Activated CD4-positive, alpha-beta memory T cell treated with anti-CD3 and anti-CD28 coated beads for 36 hours (primary cell): ENCODE measurements at regions of chr3 and their contacts with region 1.

Region 1: DNA sequence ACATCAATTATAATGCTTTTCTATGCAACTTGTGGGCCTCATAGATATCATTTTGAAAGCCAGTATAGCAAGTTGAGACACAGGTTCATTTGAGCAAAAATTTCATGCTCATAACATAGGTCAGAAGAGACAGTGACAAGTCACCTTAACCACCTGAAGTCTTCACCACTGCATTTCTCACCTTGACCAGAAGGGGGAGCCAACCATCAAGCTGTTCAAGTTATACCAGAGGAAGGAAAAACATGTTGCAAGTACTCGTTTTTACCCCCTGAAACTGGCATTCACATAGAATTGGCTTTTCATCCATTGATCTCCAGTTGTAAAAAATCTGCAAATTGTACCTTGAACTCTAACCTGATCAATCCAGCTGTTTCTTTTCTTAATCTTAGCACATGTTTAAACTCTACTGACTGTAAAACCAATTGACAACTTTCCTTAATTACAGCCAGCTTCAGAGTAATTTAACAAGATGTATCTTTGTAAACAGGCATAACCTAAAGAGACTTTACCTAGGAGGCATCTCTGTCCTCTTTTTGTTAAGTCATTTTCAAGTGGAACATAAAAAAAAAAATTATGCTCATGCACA is 1.4 kb downstream of the LMOD3 start:
- DNase-seq: peak; percentile 88
- H3K4me3 Mint-ChIP-seq: no peak overlapping the region
- H3K27ac Mint-ChIP-seq: no peak overlapping the region
- H3K4me1 Mint-ChIP-seq: peaks cover 5% of the 10 kb centered on the region
- H3K27me3 Mint-ChIP-seq: no peaks in the 10 kb centered on the region

Region 2: DNA sequence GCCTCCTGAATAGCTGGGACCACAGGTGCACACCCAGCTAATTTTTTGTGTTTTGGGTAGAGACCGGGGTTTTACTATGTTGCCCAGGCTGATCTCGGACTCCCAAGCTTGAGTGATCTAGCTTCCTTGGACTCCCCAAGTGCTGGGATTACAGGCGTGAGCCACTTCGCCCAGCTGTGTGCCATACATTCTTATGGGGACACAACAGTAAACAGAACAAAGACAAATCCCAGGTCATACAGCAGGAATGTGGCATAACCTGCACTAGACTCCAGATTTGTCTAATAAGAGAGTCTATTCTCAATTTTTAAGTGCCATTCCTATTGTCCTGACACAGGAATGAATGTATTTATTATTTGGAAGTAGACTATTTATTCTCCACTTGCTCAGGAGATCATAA is 18.6 kb before region 1 on chr3:
- CTCF ChIA-PET with region 1: interaction called, 22 read pairs
- POLR2A ChIA-PET with region 1: no interaction called
- intact Hi-C with region 1: no loop called
- DNase-seq: no peak
- H3K4me3 Mint-ChIP-seq: no peak overlapping the region
- H3K27ac Mint-ChIP-seq: no peak overlapping the region
- H3K4me1 Mint-ChIP-seq: peaks cover 54% of the 10 kb centered on the region
- H3K27me3 Mint-ChIP-seq: no peaks in the 10 kb centered on the region

Region 3: DNA sequence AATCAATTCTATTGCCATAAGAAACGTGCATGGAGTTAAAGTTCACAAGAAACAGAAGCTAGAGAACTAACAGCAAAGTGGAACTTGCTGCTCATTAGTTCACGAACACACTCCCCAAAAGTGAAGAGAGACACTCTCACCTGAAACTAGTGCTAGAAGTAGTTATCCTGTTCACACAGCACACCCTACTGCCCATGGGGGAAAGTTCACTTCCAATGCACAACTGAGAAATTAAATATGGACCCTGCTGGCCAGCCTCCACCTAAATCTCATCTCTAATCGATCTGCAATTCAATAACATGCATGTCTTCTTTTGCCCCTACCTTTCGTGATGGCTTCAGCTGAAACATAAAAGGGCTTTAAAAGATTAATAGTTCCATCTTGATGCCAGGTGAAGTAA is 304.3 kb after region 1 on chr3:
- CTCF ChIA-PET with region 1: interaction called, 22 read pairs
- POLR2A ChIA-PET with region 1: no interaction called
- intact Hi-C with region 1: no loop called
- DNase-seq: peak; percentile 57
- H3K4me3 Mint-ChIP-seq: no peak overlapping the region
- H3K27ac Mint-ChIP-seq: no peak overlapping the region
- H3K4me1 Mint-ChIP-seq: peaks cover 2% of the 10 kb centered on the region
- H3K27me3 Mint-ChIP-seq: peaks cover 2% of the 10 kb centered on the region

Region 4: DNA sequence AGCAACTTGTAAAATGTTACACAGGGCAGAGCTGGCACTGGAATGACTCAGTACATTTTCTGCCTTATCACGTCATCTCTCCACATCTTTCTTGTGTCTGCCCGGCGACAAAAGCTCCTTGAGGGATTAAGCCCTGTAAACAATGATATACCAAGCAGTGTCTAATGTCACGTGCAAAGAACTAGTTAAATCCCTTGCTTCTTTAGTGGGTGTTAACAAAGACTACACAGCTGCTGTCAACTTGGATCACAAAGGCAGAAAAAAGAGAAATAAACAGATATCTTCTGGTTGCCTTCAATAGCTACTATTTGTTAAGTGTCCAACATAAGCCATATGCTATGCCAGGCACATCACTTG is 313.0 kb after region 1 on chr3:
- CTCF ChIA-PET with region 1: interaction called, 5 read pairs
- POLR2A ChIA-PET with region 1: no interaction called
- intact Hi-C with region 1: loop called (anchors 2 kb)
- DNase-seq: peak; percentile 38
- H3K4me3 Mint-ChIP-seq: no peak overlapping the region
- H3K27ac Mint-ChIP-seq: peak overlapping the region; percentile 66
- H3K4me1 Mint-ChIP-seq: peaks cover 47% of the 10 kb centered on the region
- H3K27me3 Mint-ChIP-seq: peaks cover 26% of the 10 kb centered on the region

Region 5: DNA sequence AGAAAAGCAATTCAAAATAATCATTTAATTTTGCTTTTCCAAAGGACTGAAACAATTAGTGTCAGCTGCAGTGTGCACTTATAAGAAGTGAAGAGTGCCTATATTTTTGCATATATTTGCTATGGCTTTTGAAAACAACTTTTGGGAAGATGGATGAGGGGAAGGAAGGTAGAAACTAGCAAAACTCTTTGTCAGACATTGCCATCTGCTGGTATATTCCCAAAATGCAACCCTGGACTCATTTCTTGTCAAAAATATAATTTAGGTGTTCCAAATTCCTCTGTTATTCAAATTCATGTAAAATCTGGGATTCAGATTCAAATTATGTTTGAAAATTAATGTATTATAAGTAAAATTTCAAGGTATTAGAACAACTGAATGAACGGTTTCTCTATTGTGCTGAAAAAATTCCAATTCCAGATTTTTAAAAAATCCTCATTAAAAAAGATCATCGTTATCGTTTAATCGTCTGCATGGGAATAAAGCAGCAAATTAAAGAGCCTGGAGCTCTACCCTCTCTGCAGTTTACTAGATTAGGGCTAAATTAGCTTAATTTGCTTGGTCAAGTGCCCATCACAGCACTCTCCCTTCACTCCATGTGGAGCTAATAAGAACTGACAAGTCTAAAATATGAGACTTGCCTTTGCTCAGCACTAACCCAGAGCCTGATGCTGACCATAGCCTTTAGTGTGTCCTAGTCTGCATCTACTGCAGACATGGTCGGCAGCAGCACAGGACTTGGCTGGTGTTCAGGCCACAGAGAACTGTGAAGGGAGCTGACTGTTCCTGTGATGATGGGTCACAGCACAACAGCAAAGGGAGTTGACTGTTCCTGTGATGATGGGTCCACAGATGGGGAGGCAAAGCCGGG is 550.3 kb after region 1 on chr3:
- CTCF ChIA-PET with region 1: interaction called, 10 read pairs
- POLR2A ChIA-PET with region 1: no interaction called
- intact Hi-C with region 1: loop called (anchors 2 kb)
- DNase-seq: no peak
- H3K4me3 Mint-ChIP-seq: no peak overlapping the region
- H3K27ac Mint-ChIP-seq: no peak overlapping the region
- H3K4me1 Mint-ChIP-seq: no peaks in the 10 kb centered on the region
- H3K27me3 Mint-ChIP-seq: no peaks in the 10 kb centered on the region